PC-3 (cell line): ENCODE measurements at regions of chr3 and their contacts with region 1.

Region 1: DNA sequence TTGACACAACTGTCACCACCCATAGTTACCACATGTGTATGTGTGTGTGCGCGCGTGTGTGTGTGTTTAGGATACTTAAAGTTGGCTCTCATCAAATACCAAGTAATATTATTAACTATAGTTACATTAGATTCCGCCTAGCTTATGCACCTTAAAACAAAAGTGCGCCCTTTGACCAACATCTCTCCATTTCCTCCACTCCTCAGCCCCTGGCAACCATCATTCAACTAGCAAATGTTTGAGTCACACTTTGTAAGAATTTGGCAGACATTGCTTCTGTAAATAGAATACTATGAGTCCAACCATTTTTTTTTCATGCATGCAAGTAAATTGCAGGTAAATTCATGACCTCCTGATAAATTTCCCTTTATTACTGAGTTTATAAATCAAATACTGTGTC is 169.3 kb downstream of the GBE1 start:
- DNase-seq: peak; percentile 89
- ATAC-seq: peak; percentile 92
- H3K4me3 ChIP-seq: peak overlapping the region; percentile 2; the same call in 1 of the 2 replicates
- H3K27ac ChIP-seq: peak overlapping the region; percentile 55
- H3K4me1 ChIP-seq: peaks cover 25% of the 10 kb centered on the region
- H3K27me3 ChIP-seq: no peaks in the 10 kb centered on the region
- CTCF ChIP-seq: no peak

Region 2: GRCh38 chr3:81612768-81613167 is 20.7 kb after region 1 on chr3:
- CTCF ChIA-PET with region 1: no interaction called
- POLR2A ChIA-PET with region 1: no interaction called
- intact Hi-C with region 1: no loop called
- DNase-seq: no peak
- ATAC-seq: no peak
- H3K4me3 ChIP-seq: no peak overlapping the region
- H3K27ac ChIP-seq: no peak overlapping the region
- H3K4me1 ChIP-seq: peaks cover 15% of the 10 kb centered on the region; the same call in 1 of the 2 replicates
- H3K27me3 ChIP-seq: no peaks in the 10 kb centered on the region
- CTCF ChIP-seq: no peak

Region 3: DNA sequence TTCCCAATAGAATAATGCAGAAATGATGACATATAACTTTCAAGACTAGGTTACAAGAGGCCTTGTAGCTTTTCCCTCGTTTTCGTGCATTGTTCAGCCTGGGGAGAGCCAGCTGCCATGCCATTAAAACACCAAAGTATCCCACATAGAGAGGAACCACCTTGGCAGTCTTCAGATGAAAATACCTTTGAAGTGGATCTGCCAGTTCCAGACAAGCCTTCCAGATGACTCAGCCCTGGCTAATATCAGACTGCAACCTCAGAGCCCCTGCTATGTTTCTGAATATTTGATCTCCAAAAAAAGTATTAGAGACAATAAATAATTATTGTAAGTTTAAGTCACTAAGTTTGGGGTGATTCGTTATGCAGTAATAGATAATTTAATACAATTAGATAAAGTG is 463.7 kb after region 1 on chr3:
- CTCF ChIA-PET with region 1: no interaction called
- POLR2A ChIA-PET with region 1: no interaction called
- intact Hi-C with region 1: loop called (anchors 10 kb)
- DNase-seq: peak; percentile 84
- ATAC-seq: peak; percentile 95
- H3K4me3 ChIP-seq: no peak overlapping the region
- H3K27ac ChIP-seq: peak overlapping the region; percentile 20; the same call in 1 of the 2 replicates
- H3K4me1 ChIP-seq: peaks cover 29% of the 10 kb centered on the region
- H3K27me3 ChIP-seq: no peaks in the 10 kb centered on the region
- CTCF ChIP-seq: no peak